Thyroid gland (tissue), 4 donors: ENCODE measurements at regions of chr5 and their contacts with region 1.

Region 1: GRCh38 chr5:32618962-32619361 is 33.6 kb downstream of the SUB1 start:
- DNase-seq: no peak
- H3K4me3 ChIP-seq: no peak overlapping the region
- H3K27ac ChIP-seq: no peak overlapping the region
- H3K4me1 ChIP-seq: no peaks in the 10 kb centered on the region
- H3K27me3 ChIP-seq: no peaks in the 10 kb centered on the region
- CTCF ChIP-seq: no peak
- POLR2A ChIP-seq: no peak

Region 2: GRCh38 chr5:32489791-32490582 is 129.0 kb before region 1 on chr5:
- intact Hi-C with region 1: loop called (anchors 5 kb)
- DNase-seq: peak; percentile 67 to 81
- H3K4me3 ChIP-seq: no peak overlapping the region
- H3K27ac ChIP-seq: no peak overlapping the region
- H3K4me1 ChIP-seq: no peaks in the 10 kb centered on the region
- H3K27me3 ChIP-seq: no peaks in the 10 kb centered on the region
- CTCF ChIP-seq: peak; percentile 21 to 70 (median 61)
- POLR2A ChIP-seq: no peak